ENCODE measurements at regions of chr6 and their contacts with region 1.

Region 1: GRCh38 chr6:161273752-161274487 is at the start of gene AGPAT4:
- DNase-seq: peak; percentile 73 to 75
- H3K4me3 ChIP-seq: peak within 1 kb of the TSS; percentile 45
- H3K4me3 Mint-ChIP-seq: peak within 1 kb of the TSS; percentile 95
- H3K27ac Mint-ChIP-seq: peak within 1 kb of the TSS; percentile 91
- H3K4me1 ChIP-seq: peaks cover 8% of the 10 kb centered on the region
- H3K4me1 Mint-ChIP-seq: peaks cover 18% of the 10 kb centered on the region
- H3K27me3 ChIP-seq: no peaks in the 10 kb centered on the region
- H3K27me3 Mint-ChIP-seq: no peaks in the 10 kb centered on the region
- CTCF ChIP-seq: no peak
- total RNA-seq, gene AGPAT4: 9.2 and 12.0 TPM in 2 replicates

Region 2: DNA sequence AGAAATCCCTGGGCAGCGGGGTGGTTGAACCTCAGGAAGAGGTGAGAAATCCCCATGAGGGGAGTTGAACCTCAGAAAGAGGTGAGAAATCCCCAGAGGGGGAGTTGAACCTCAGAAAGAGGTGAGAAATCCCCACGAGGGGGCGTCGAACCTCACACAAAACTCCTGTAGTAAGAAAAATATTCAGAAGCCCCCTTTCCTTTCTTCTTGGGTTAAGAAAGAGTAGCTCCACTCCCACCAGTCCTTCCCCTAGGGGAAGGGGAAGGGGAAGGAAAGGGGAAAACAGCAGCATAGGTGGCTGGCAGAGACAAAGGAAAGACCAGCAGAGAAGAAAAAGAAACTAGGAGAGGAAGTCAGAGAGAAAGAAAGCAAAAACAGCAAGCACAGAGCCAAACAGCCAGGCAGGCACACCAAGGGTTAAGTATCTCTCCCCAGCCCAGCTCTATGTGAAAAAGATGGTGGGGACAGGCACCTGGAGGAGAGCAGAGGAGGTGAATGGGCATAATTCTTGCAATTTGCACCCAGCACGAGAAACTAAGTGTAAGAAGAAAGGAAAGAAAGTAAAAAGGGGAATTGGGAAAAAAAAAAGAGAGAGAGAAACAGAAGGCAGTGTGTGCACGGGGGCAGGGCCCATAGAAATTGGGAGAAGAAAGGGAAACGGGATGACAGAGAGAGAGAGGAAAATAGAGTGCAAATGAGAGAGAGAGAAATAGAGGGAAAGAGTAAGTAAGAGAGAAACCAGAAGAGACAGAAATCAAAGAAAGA is 483.7 kb before region 1 on chr6:
- CTCF ChIA-PET with region 1: no interaction called
- POLR2A ChIA-PET with region 1: no interaction called
- intact Hi-C with region 1: no loop called
- DNase-seq: no peak
- H3K4me3 ChIP-seq: no peak overlapping the region
- H3K4me3 Mint-ChIP-seq: no peak overlapping the region
- H3K27ac Mint-ChIP-seq: no peak overlapping the region
- H3K4me1 ChIP-seq: no peaks in the 10 kb centered on the region
- H3K4me1 Mint-ChIP-seq: no peaks in the 10 kb centered on the region
- H3K27me3 ChIP-seq: no peaks in the 10 kb centered on the region
- H3K27me3 Mint-ChIP-seq: no peaks in the 10 kb centered on the region
- CTCF ChIP-seq: peak in 1 of 2 experiments; percentile 2

Region 3: GRCh38 chr6:161139766-161140553 is 134.0 kb before region 1 on chr6:
- CTCF ChIA-PET with region 1: no interaction called
- POLR2A ChIA-PET with region 1: no interaction called
- intact Hi-C with region 1: loop called (anchors 5 kb)
- DNase-seq: peak; percentile 85 to 88
- H3K4me3 ChIP-seq: no peak overlapping the region
- H3K4me3 Mint-ChIP-seq: no peak overlapping the region
- H3K27ac Mint-ChIP-seq: no peak overlapping the region
- H3K4me1 ChIP-seq: peaks cover 4% of the 10 kb centered on the region; the same call in 1 of the 2 replicates
- H3K4me1 Mint-ChIP-seq: no peaks in the 10 kb centered on the region
- H3K27me3 ChIP-seq: no peaks in the 10 kb centered on the region
- H3K27me3 Mint-ChIP-seq: no peaks in the 10 kb centered on the region
- CTCF ChIP-seq: peak; percentile 67 to 86

Region 4: DNA sequence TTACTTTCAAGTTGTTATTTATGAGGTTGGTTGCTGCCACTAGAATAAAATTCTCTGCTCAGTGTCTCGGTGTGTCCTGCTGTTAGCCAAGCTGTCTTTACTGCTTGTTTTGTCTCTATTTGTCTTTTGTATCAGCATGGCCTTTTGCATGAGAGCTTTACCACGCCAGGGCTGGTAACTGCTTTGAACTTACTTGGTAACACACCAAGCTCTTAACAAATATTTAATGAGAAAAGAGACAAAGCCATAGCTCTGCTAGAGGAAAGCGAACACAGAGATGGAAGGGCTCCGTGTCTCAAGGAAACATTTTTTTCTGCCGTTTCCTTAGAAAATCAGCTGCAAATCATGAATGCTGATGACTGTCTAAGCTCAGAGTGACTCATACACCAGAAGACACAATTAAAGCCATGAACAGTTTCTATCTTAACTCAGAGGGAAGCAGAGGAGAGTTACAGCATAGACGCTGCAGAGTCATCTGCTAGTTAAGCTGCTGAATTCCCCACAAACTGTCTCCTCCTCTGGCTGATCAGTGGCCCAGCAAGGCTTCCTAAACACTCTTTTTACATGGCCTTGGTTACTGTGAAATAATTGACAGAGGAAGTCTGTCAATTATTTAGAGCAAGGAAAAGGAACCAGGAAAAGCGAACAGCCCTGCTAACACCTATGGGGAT is 44.9 kb before region 1 on chr6:
- CTCF ChIA-PET with region 1: no interaction called
- POLR2A ChIA-PET with region 1: interaction called, 4 read pairs
- intact Hi-C with region 1: loop called (anchors 1 kb)
- DNase-seq: peak in 1 of 2 experiments; percentile 8
- H3K4me3 ChIP-seq: no peak overlapping the region
- H3K4me3 Mint-ChIP-seq: peak overlapping the region; percentile 2
- H3K27ac Mint-ChIP-seq: peak overlapping the region; percentile 38
- H3K4me1 ChIP-seq: no peaks in the 10 kb centered on the region
- H3K4me1 Mint-ChIP-seq: peaks cover 14% of the 10 kb centered on the region
- H3K27me3 ChIP-seq: no peaks in the 10 kb centered on the region
- H3K27me3 Mint-ChIP-seq: no peaks in the 10 kb centered on the region
- CTCF ChIP-seq: no peak

Region 5: GRCh38 chr6:161295784-161296183 is 21.9 kb after region 1 on chr6:
- CTCF ChIA-PET with region 1: no interaction called
- POLR2A ChIA-PET with region 1: no interaction called
- intact Hi-C with region 1: no loop called
- DNase-seq: no peak
- H3K4me3 ChIP-seq: no peak overlapping the region
- H3K4me3 Mint-ChIP-seq: no peak overlapping the region
- H3K27ac Mint-ChIP-seq: no peak overlapping the region
- H3K4me1 ChIP-seq: no peaks in the 10 kb centered on the region
- H3K4me1 Mint-ChIP-seq: no peaks in the 10 kb centered on the region
- H3K27me3 ChIP-seq: no peaks in the 10 kb centered on the region
- H3K27me3 Mint-ChIP-seq: no peaks in the 10 kb centered on the region
- CTCF ChIP-seq: no peak

Region 6: GRCh38 chr6:161850562-161850961 is 576.6 kb after region 1 on chr6:
- CTCF ChIA-PET with region 1: no interaction called
- POLR2A ChIA-PET with region 1: no interaction called
- intact Hi-C with region 1: no loop called
- DNase-seq: no peak
- H3K4me3 ChIP-seq: no peak overlapping the region
- H3K4me3 Mint-ChIP-seq: no peak overlapping the region
- H3K27ac Mint-ChIP-seq: no peak overlapping the region
- H3K4me1 ChIP-seq: no peaks in the 10 kb centered on the region
- H3K4me1 Mint-ChIP-seq: no peaks in the 10 kb centered on the region
- H3K27me3 ChIP-seq: no peaks in the 10 kb centered on the region
- H3K27me3 Mint-ChIP-seq: peaks cover 8% of the 10 kb centered on the region
- CTCF ChIP-seq: no peak